GM23248 (cell line): ENCODE measurements at regions of chr18 and their contacts with region 1.

Region 1: DNA sequence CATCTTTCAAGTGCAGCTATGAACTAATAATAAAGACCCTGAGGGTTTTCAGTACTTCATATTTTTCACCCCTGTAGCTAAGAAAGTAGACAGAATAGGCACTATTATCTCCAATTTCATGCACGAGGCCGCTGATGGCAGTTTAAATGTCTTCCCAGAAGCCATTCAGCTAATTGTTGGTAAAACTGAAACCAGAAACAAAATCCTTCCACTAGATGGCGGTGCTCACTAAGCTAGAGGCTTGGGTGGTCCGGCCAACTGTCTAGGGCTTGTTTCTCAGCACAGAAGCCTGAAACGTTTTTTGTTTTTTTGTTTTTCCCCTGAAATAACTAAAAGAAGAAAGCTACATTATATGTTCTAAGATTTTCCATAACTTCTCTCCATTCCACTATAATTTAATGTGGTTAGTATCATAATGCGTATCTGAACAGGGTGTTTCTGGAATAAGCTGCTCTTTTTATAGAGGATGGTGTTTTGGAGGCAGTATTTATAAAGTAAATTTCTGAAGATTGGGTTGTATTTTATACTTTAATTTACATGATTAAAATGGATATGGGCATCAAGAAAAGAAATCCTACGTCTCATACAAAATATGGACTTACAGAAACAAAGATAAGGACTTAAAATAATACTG is 159.4 kb downstream of the PIK3C3 start:
- DNase-seq: peak; percentile 86
- H3K4me3 ChIP-seq: no peak overlapping the region
- H3K27ac ChIP-seq: peak overlapping the region; percentile 62
- H3K4me1 ChIP-seq: peaks cover 19% of the 10 kb centered on the region
- H3K27me3 ChIP-seq: no peaks in the 10 kb centered on the region

Region 2: GRCh38 chr18:42298759-42299675 is 184.6 kb after region 1 on chr18:
- in situ Hi-C with region 1: loop called (anchors 25 kb)
- DNase-seq: peak; percentile 82
- H3K4me3 ChIP-seq: peak overlapping the region; percentile 56
- H3K27ac ChIP-seq: no peak overlapping the region
- H3K4me1 ChIP-seq: no peaks in the 10 kb centered on the region
- H3K27me3 ChIP-seq: 0 out of 2 replicates have a peak, but pooled peaks cover 7% of the 10 kb centered on the region

Region 3: GRCh38 chr18:43271593-43272432 is 1157.4 kb after region 1 on chr18:
- in situ Hi-C with region 1: loop called (anchors 25 kb)
- DNase-seq: peak; percentile 61
- H3K4me3 ChIP-seq: no peak overlapping the region
- H3K27ac ChIP-seq: no peak overlapping the region
- H3K4me1 ChIP-seq: no peaks in the 10 kb centered on the region
- H3K27me3 ChIP-seq: peaks cover 4% of the 10 kb centered on the region